Heart left ventricle (tissue), 16 donors: ENCODE measurements at regions of chr1 and their contacts with region 1.

Region 1: DNA sequence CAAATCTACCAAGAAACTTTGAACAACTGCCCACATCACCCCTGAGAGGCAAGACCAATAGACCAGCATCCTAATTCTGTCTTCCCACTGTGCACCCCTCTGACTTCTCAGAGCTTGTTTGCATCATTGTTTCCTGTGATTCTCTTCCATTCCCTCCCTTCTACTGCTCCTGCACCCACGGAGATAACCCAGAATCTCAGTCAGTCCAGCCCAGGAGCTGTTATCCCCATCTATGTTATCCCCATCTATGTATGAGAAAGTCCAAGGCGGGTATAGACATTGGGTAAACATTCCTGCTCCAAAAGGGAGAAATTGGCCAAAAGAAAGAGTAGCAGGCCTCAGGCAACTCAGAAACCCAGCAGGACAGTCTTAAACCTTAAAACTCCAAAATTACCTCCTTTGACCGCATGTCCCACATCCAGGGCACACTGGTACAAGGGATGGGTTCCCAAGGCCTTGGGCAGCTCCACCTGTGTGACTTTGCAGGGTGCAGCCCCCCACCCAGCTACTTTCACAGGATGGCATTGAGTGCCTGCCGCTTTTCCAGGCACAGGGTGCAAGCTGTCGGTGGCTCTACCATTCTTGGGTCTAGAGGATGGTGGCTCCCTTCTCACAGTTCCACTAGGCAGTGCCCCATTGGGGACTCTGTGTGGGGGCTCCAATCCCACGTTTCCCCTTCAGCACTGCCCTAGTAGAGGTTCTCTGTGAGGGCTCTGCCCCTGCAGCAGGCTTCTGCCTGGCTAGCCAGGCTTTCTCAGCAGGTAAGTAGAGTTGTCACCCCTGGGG is 414.8 kb downstream of the NPHP4 start:
- DNase-seq: no peak
- ATAC-seq: no peak
- H3K4me3 ChIP-seq: no peak overlapping the region
- H3K27ac ChIP-seq: no peak overlapping the region
- H3K4me1 ChIP-seq: no peaks in the 10 kb centered on the region
- H3K27me3 ChIP-seq: peaks cover 0 to 16% (median 0%) of the 10 kb centered on the region in 9 donors
- CTCF ChIP-seq: no peak
- POLR2A ChIP-seq: no peak

Region 2: DNA sequence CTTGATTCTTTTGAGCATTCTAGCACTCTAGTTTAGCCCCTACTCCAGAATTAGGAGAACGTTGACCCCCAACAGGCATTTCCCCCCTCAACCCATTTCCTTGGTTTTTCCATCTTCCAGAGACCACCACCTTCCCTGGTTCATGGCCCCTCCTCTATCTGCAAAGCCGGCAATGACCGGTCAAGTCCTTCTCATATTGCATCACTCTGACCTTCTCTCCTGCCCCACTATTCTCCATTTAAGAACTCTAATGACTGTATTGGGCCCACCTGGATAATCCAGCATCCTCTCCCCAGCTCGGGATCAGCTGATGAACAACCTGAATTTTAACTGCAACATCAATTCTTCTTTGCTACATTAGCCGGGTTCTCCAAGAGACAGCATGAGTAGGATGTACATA is 22.7 kb before region 1 on chr1:
- intact Hi-C with region 1: loop called in 1 of 10 experiments (anchors 1 kb)
- DNase-seq: no peak
- ATAC-seq: no peak
- H3K4me3 ChIP-seq: no peak overlapping the region
- H3K27ac ChIP-seq: no peak overlapping the region
- H3K4me1 ChIP-seq: no peaks in the 10 kb centered on the region
- H3K27me3 ChIP-seq: peaks cover 0 to 8% (median 0%) of the 10 kb centered on the region in 9 donors
- CTCF ChIP-seq: no peak
- POLR2A ChIP-seq: no peak